Gastrocnemius medialis (tissue), 4 donors: ENCODE measurements at regions of chr9 and their contacts with region 1.

Region 1: GRCh38 chr9:18405240-18405639 is 68.7 kb upstream of the ADAMTSL1 start:
- DNase-seq: no peak
- ATAC-seq: no peak
- H3K4me3 ChIP-seq: no peak overlapping the region
- H3K27ac ChIP-seq: no peak overlapping the region
- H3K4me1 ChIP-seq: no peaks in the 10 kb centered on the region
- H3K27me3 ChIP-seq: no peaks in the 10 kb centered on the region
- CTCF ChIP-seq: no peak
- POLR2A ChIP-seq: no peak

Region 2: GRCh38 chr9:18520416-18521047 is 115.3 kb after region 1 on chr9:
- in situ Hi-C with region 1: loop called in 1 of 4 experiments (anchors 25 kb)
- intact Hi-C with region 1: no loop called
- DNase-seq: no peak
- ATAC-seq: no peak
- H3K4me3 ChIP-seq: no peak overlapping the region
- H3K27ac ChIP-seq: no peak overlapping the region
- H3K4me1 ChIP-seq: no peaks in the 10 kb centered on the region
- H3K27me3 ChIP-seq: no peaks in the 10 kb centered on the region
- CTCF ChIP-seq: no peak
- POLR2A ChIP-seq: no peak

Region 3: DNA sequence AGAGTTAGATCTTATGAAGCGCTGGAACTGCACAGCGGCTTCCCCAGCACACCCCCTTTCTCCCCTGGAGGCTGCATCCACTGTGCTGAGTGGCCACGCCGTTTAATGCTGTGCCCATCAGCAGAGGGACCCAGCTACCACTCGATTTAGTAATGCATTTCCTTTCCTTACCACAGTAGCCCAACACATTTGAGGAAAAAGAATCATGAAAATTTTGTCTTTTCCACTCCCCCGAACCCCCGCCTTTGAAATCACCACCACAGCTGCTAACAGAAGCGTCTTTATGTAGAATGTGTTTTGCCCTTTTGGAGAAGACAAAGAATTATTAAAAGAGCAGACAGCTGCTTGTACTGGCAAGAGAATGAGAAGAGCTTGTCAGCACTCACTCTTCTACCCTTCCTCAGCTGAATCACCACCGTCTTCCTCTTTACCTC is 1076.7 kb after region 1 on chr9:
- in situ Hi-C with region 1: no loop called
- intact Hi-C with region 1: no loop called
- DNase-seq: no peak
- ATAC-seq: no peak
- H3K4me3 ChIP-seq: no peak overlapping the region
- H3K27ac ChIP-seq: no peak overlapping the region
- H3K4me1 ChIP-seq: no peaks in the 10 kb centered on the region
- H3K27me3 ChIP-seq: peaks cover 0 to 3% (median 0%) of the 10 kb centered on the region in 3 donors
- CTCF ChIP-seq: no peak
- POLR2A ChIP-seq: no peak